Activated CD4-positive, alpha-beta T cell treated with anti-CD3 and anti-CD28 coated beads, Interleukin-2, amount 10 ng/mL, durations not matched to agents 24 days and 14 days (primary cell): ENCODE measurements at regions of chr10 and their contacts with region 1.

Region 1: GRCh38 chr10:62183442-62183841 is 85.2 kb downstream of the RTKN2 start:
- DNase-seq: peak; percentile 90
- H3K4me3 Mint-ChIP-seq: peak overlapping the region; percentile 41
- H3K27ac Mint-ChIP-seq: peak overlapping the region; percentile 92
- H3K4me1 Mint-ChIP-seq: peaks cover 68% of the 10 kb centered on the region
- H3K27me3 Mint-ChIP-seq: no peaks in the 10 kb centered on the region

Region 2: GRCh38 chr10:61896854-61897661 is 286.4 kb before region 1 on chr10:
- intact Hi-C with region 1: loop called (anchors 1 kb)
- DNase-seq: peak; percentile 91
- H3K4me3 Mint-ChIP-seq: peak overlapping the region; percentile 92
- H3K27ac Mint-ChIP-seq: peak overlapping the region; percentile 93
- H3K4me1 Mint-ChIP-seq: peaks cover 36% of the 10 kb centered on the region
- H3K27me3 Mint-ChIP-seq: no peaks in the 10 kb centered on the region

Region 3: GRCh38 chr10:61987951-61988379 is 195.5 kb before region 1 on chr10:
- intact Hi-C with region 1: loop called (anchors 1 kb)
- DNase-seq: peak; percentile 84
- H3K4me3 Mint-ChIP-seq: peak overlapping the region; percentile 72
- H3K27ac Mint-ChIP-seq: peak overlapping the region; percentile 96
- H3K4me1 Mint-ChIP-seq: peaks cover 71% of the 10 kb centered on the region
- H3K27me3 Mint-ChIP-seq: no peaks in the 10 kb centered on the region

Region 4: DNA sequence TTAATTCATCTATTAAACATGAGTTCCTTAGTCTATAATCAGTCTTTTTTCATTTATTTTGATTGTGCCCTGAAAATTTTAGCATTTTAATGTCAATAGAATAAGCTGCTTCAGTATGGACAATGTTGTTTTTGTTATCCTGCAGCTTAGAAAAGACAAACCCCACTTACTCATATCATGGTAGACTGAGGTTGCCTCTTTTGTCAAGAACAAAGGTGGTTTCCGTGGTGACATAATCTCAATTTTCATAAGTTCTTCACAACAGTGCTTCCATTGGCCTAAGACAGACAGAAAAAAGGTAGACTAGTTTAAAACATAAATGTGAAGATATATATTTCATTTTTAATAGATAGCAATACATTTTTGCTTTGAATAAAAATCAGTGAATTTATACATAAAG is 16.1 kb after region 1 on chr10:
- intact Hi-C with region 1: loop called (anchors 1 kb)
- DNase-seq: peak; percentile 77
- H3K4me3 Mint-ChIP-seq: no peak overlapping the region
- H3K27ac Mint-ChIP-seq: peak overlapping the region; percentile 62
- H3K4me1 Mint-ChIP-seq: peaks cover 17% of the 10 kb centered on the region
- H3K27me3 Mint-ChIP-seq: no peaks in the 10 kb centered on the region

Region 5: GRCh38 chr10:62637249-62638061 is 454.0 kb after region 1 on chr10:
- intact Hi-C with region 1: loop called (anchors 5 kb)
- DNase-seq: peak; percentile 92
- H3K4me3 Mint-ChIP-seq: no peak overlapping the region
- H3K27ac Mint-ChIP-seq: no peak overlapping the region
- H3K4me1 Mint-ChIP-seq: peaks cover 22% of the 10 kb centered on the region
- H3K27me3 Mint-ChIP-seq: no peaks in the 10 kb centered on the region

Region 6: GRCh38 chr10:63268798-63269503 is 1085.5 kb after region 1 on chr10:
- intact Hi-C with region 1: loop called (anchors 5 kb)
- DNase-seq: peak; percentile 95
- H3K4me3 Mint-ChIP-seq: peak overlapping the region; percentile 93
- H3K27ac Mint-ChIP-seq: peak overlapping the region; percentile 99
- H3K4me1 Mint-ChIP-seq: peaks cover 21% of the 10 kb centered on the region
- H3K27me3 Mint-ChIP-seq: no peaks in the 10 kb centered on the region